GM10248 (cell line): ENCODE measurements at regions of chr16 and their contacts with region 1.

Region 1: GRCh38 chr16:11205754-11206581 is 50.0 kb downstream of the SOCS1 start:
- DNase-seq: peak; percentile 57
- CTCF ChIP-seq: no peak

Region 2: GRCh38 chr16:11133344-11133943 is 72.5 kb before region 1 on chr16:
- CTCF ChIA-PET with region 1: no interaction called
- POLR2A ChIA-PET with region 1: no interaction called
- DNase-seq: no peak
- CTCF ChIP-seq: no peak

Region 3: DNA sequence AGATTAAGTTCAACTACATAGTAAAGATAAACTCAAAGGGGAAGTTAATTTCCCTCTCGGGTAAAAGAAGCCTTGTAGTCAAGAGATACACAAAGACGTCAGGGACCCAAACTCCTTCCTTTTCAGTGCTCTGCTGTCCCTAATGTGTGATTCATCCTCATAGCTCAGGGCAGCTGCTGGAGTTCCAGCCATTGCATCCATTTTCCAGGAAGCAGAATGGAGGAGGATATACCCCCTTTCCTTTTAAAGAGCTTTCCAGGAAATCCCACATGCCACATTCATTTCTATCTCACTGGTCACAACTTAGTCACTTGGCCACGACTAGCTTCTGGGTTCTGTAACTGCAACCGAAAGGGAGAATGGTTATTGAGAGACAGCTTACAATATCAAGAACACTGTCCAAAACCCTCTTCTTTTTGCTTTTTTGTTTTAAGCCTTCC is 45.3 kb before region 1 on chr16:
- CTCF ChIA-PET with region 1: no interaction called
- POLR2A ChIA-PET with region 1: no interaction called
- DNase-seq: no peak
- CTCF ChIP-seq: no peak

Region 4: DNA sequence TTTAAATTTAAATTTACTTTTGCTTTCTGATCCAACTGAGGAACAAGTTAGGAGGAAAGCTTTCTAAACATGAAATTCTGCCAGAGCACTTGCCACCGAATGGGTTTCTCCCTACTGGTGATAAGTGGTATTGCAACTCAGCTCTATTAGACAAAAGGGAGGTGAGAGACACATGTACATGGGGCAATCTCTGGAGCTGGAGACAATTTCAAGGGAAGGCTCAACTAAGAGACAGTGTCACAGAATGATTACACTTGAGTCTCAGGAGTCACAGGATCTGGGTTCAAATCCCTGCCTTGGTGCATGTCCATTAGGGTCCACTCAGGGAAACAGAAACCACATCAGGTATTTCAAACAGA is 12.6 kb after region 1 on chr16:
- CTCF ChIA-PET with region 1: interaction called, 10 read pairs
- POLR2A ChIA-PET with region 1: no interaction called
- DNase-seq: no peak
- CTCF ChIP-seq: no peak

Region 5: DNA sequence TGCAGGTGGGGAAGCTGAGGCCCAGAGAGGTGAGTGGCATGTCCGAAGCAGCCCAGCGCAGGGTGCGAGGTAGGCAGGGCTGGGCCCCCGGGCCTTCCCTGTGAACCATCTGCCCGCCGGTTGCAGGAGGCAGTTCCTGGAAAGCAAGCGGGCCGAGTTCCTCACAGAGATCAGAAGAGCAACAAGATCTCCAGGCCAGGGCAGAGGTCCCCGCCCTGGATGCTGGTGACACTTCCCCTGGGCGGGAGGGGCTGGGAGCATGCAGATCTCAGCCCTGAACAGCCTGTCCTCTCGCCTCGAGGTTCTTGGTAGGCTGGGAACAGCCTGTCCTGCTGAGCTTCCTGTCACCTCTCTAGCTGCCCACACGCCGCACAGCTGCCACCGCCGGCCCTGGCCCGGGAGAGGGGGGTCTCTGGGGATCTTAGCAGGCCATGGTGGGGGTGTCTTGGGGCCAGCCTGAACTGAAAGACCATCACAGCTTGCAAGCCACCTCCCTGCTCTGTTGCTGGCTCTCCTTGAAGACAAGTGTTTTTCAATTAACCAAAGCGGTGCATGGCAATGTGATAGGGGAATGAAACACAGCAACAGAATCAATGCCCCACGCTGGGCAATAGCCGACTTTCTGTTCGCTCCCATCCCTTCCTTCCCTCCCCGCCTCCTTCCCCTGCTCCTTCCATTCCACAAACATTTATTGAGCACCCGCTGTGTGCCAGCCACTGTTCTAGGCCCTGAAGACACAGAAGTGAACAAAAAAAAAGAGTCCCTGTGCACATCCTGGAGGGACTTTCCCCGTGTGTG is 18.3 kb after region 1 on chr16:
- CTCF ChIA-PET with region 1: interaction called, 13 read pairs
- POLR2A ChIA-PET with region 1: interaction called, 4 read pairs
- DNase-seq: peak; percentile 85
- CTCF ChIP-seq: no peak